ENCODE measurements at regions of chr1 and their contacts with region 1.

Region 1: DNA sequence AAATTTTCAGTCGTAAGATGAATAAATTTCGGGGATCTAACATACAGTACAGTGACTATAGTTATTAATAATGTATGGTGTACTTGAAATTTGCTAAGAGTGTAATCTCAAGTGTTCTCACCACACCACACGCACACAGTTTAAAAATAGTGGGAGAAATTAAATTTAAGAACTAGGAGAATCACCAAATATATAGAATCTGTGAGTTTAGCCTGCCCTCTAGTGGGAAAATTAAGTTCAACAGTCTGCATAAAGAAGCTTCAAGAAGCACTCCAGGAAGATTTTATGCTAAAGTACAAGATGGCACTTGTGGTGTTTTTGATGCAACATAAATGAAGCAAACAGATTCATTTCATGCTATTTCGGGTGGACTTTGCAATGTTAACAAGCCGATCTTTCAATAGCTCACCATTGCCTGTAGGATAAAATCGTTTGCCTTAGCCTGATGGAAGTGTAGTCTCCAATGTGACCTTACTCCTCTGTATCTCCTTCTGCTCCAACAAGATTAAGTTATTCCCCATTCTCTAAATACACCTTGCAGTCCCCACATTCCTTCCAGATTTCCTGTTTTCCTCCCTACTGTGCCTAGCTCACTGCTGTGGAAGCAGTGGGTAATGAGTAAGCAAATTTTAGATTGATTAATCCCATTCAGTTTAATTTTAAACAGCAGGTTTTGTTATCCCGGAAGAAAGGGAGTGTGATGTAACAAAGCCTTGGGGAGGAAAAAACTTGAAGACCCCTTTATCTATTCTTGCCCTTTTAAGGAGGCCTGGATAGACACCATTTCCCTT is 8.7 kb upstream of the PIK3C2B start:
- DNase-seq: no peak
- ATAC-seq: peak in 1 of 2 donors; percentile 18
- H3K4me3 ChIP-seq: no peak overlapping the region
- H3K27ac ChIP-seq: no peak overlapping the region
- H3K4me1 ChIP-seq: peaks cover 24% of the 10 kb centered on the region
- H3K27me3 ChIP-seq: no peaks in the 10 kb centered on the region
- CTCF ChIP-seq: peak; percentile 83

Region 2: DNA sequence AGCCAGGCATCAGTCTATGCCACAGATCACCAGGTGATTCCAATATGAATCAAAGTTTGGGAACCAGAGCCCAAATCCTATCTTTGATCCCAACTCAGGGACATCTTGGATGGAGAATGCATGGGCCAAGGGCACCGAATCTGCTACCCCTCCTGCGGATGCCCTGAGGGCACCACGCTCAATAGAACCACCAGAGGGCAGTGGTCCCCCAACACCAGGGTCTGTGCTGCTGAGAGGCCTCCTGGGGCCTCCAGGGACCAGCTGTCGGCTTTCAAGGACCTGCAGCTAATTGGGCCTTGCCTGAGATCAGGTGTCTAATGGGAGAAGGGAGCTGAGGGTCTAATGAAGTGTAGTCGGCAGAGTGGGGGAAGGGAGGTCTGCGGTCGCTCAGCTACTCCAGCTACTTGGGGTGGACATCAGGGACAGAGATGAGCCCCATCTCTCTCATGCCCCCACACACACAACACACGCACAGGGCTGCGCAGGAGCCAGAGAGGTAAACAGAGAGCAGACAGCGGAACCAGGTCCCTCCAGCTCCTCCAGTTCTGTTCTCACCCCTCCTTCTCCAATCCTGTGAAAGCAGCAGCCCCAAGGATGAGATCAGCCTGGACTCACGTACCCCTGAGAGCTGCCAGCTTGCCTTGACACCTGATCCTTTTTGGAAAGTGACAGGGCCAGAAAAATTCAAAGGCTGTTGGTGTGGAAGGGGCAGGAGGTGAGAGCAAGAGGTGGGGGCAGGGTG is 56.8 kb before region 1 on chr1:
- intact Hi-C with region 1: loop called (anchors 5 kb)
- DNase-seq: peak; percentile 76
- ATAC-seq: peak; percentile 73 to 77
- H3K4me3 ChIP-seq: no peak overlapping the region
- H3K27ac ChIP-seq: no peak overlapping the region
- H3K4me1 ChIP-seq: peaks cover 44% of the 10 kb centered on the region
- H3K27me3 ChIP-seq: no peaks in the 10 kb centered on the region
- CTCF ChIP-seq: peak; percentile 85